GM12878 (cell line): ENCODE measurements at regions of chr16 and their contacts with region 1.

Region 1: DNA sequence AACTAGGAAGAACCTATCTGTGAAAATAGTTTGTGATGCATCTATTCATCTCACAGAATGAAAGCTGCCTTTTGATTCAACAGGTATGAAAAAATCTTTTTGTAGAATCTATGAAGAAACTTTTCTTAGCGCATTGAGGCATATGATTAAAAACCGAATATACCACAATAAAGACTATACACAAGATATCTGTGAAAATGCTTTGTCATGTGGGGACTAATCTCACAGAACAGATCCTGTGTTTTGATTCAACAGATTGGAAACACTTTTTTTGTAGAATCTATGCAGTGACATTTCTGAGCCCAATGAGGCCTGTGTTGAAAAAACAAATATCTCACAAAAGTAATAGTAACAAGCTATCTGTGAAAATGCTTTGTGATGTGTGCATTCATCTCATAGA is 2247.5 kb downstream of the TP53TG3F start:
- DNase-seq: no peak
- ATAC-seq: no peak
- H3K4me3 ChIP-seq: no peak overlapping the region
- H3K27ac ChIP-seq: no peak overlapping the region
- H3K4me1 ChIP-seq: no peaks in the 10 kb centered on the region
- H3K27me3 ChIP-seq: no peaks in the 10 kb centered on the region
- CTCF ChIP-seq: no peak
- EP300 ChIP-seq: no peak
- POLR2A ChIP-seq: no peak
- RAD21 ChIP-seq: no peak

Region 2: GRCh38 chr16:35559911-35560636 is 146.8 kb before region 1 on chr16:
- CTCF ChIA-PET with region 1: no interaction called
- POLR2A ChIA-PET with region 1: no interaction called
- RAD21 ChIA-PET with region 1: no interaction called
- SMC1A ChIA-PET with region 1: no interaction called
- in situ Hi-C with region 1: no loop called
- intact Hi-C with region 1: no loop called
- DNase-seq: no peak
- ATAC-seq: peak; percentile 34; the same call in 1 of the 3 replicates
- H3K4me3 ChIP-seq: no peak overlapping the region
- H3K27ac ChIP-seq: no peak overlapping the region
- H3K4me1 ChIP-seq: no peaks in the 10 kb centered on the region
- H3K27me3 ChIP-seq: no peaks in the 10 kb centered on the region
- CTCF ChIP-seq: no peak
- EP300 ChIP-seq: no peak
- POLR2A ChIP-seq: no peak
- RAD21 ChIP-seq: 0 out of 2 replicates have a peak, but pooled peaks have one; percentile 16

Region 3: DNA sequence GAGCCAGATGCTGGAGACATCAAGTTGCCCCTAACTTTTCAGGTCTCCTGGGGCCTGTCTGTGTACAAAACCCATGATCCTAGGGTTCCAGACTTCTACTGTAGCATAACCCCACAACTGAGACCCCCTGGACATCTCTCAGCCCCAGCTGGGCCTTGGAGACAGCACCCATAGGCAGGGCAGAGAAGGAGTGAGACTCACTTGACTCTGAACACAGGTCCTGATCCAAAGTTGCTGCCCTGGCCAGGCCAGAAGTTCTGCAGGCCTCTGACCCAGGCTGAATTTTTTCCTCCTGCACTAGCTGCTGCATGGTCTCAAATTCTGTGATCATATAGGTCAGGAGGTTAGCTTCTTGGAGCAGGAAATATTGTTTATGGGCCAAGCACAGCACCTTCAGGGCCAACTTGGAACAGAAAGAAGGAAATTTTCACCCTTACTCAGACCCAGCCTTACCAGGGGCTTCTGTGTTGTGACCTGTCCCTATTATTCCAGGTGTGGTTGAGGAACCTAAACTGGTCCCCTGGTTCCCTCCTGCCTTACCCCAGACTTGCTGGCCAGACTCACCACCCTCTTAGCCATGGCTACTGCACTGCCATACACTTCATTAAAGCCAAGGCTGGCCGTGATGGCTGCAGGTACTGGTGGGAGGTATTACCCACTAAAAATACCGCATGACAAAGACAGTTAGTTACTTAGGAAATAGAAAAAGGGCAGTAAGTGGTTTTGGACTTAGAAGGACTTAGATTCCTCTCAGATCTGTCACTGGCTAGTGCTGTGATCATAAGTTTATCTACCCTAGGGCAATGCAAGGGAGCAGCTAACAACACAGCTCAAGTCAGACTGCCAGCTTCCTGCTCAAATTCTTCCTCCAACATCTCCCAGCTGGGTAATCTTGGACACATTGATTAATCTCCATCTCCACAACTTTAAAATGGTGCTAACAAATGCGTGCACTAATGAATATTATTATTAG is 67.4 kb before region 1 on chr16:
- CTCF ChIA-PET with region 1: no interaction called
- POLR2A ChIA-PET with region 1: no interaction called
- RAD21 ChIA-PET with region 1: no interaction called
- SMC1A ChIA-PET with region 1: no interaction called
- in situ Hi-C with region 1: loop called (anchors 5 kb)
- intact Hi-C with region 1: no loop called
- DNase-seq: no peak
- ATAC-seq: no peak
- H3K4me3 ChIP-seq: no peak overlapping the region
- H3K27ac ChIP-seq: no peak overlapping the region
- H3K4me1 ChIP-seq: no peaks in the 10 kb centered on the region
- H3K27me3 ChIP-seq: no peaks in the 10 kb centered on the region
- CTCF ChIP-seq: no peak
- EP300 ChIP-seq: no peak
- POLR2A ChIP-seq: no peak
- RAD21 ChIP-seq: no peak